ENCODE measurements at regions of chr2 and their contacts with region 1.

Region 1: DNA sequence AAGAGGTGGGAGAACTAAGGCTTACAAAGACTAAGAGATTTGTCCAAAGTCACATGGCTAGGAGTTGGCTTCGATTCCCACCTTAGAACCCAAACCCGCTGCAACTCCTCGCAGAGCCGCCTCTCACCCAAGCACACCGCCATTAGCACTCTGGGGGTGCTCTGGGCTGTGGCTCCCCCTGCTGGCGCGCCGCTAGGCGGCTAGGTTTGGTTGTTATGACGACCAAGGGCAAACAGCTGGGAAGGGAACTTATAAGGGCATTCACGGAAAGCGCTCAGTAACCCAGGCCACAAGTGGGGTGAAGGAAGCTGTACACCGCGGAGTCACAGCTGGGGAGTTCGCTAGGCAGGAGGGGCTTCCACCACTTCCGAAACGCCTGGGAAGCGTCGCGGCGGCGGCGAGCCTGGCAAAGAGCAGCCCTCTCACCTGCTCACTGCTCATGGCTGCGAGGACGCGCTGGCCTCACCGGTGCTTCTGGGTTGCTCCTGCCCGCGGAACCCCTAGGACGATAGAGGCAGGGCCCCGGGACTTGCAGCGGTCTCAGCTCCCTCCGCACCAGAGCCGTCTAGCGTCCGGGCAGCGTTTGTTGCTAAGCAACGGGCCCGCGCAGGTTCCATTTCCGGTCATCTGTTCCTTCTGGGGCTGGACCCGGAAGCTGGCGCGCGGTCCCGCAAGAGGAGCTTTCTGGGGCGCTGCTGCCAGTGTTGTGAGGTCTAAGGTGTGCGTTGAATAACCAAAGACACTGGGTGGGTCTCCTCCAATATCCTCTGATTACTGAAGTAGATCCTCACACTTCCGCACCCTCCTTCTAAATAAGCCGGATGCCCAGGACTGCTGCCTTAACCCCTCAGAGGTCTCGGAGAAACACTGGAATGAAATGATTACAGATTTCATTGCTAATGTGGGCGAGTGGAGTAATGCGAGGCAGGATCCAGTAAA is at the start of gene DNAH7:
- DNase-seq: peak; percentile 95
- H3K4me3 Mint-ChIP-seq: peak within 1 kb of the TSS; percentile 87
- H3K27ac Mint-ChIP-seq: no peak within 1 kb of the TSS
- H3K4me1 Mint-ChIP-seq: peaks cover 9% of the 10 kb centered on the region
- H3K27me3 Mint-ChIP-seq: peaks cover 2% of the 10 kb centered on the region
- total RNA-seq, gene DNAH7: 0.29 TPM in 1 of 2 experiments, not detected in the other

Region 2: GRCh38 chr2:195318440-195319111 is 750.0 kb before region 1 on chr2:
- CTCF ChIA-PET with region 1: interaction called, 5 read pairs
- intact Hi-C with region 1: loop called (anchors 2 kb)
- DNase-seq: peak; percentile 69
- H3K4me3 Mint-ChIP-seq: no peak overlapping the region
- H3K27ac Mint-ChIP-seq: no peak overlapping the region
- H3K4me1 Mint-ChIP-seq: peaks cover 10% of the 10 kb centered on the region
- H3K27me3 Mint-ChIP-seq: no peaks in the 10 kb centered on the region

Region 3: GRCh38 chr2:195575879-195576401 is 492.6 kb before region 1 on chr2:
- CTCF ChIA-PET with region 1: interaction called, 8 read pairs
- intact Hi-C with region 1: loop called (anchors 1 kb)
- DNase-seq: peak; percentile 32
- H3K4me3 Mint-ChIP-seq: peak overlapping the region; percentile 37
- H3K27ac Mint-ChIP-seq: peak overlapping the region; percentile 78
- H3K4me1 Mint-ChIP-seq: peaks cover 77% of the 10 kb centered on the region
- H3K27me3 Mint-ChIP-seq: no peaks in the 10 kb centered on the region

Region 4: GRCh38 chr2:195830968-195831950 is 237.3 kb before region 1 on chr2:
- CTCF ChIA-PET with region 1: no interaction called
- intact Hi-C with region 1: no loop called
- DNase-seq: no peak
- H3K4me3 Mint-ChIP-seq: no peak overlapping the region
- H3K27ac Mint-ChIP-seq: no peak overlapping the region
- H3K4me1 Mint-ChIP-seq: no peaks in the 10 kb centered on the region
- H3K27me3 Mint-ChIP-seq: no peaks in the 10 kb centered on the region

Region 5: DNA sequence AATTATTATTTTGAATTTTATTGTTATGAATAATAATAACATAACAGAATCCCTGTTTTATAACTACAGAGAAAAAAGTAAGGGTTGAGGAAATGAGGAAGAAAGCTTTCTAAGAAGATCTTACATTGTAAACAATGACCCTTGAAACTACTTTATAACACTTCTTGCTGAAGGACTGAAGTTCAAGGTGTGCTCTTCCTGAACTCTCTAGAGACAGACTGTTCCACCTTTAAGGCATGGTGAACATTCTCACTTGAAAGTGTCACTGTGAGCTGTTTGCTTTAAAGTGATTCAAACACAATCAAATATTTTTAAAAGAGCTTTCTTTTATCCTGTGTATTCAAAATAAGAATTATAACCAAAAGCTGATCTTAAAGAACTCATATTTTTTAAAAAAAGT is 131.4 kb before region 1 on chr2:
- CTCF ChIA-PET with region 1: interaction called, 3 read pairs
- intact Hi-C with region 1: loop called (anchors 1 kb)
- DNase-seq: no peak
- H3K4me3 Mint-ChIP-seq: no peak overlapping the region
- H3K27ac Mint-ChIP-seq: no peak overlapping the region
- H3K4me1 Mint-ChIP-seq: no peaks in the 10 kb centered on the region
- H3K27me3 Mint-ChIP-seq: no peaks in the 10 kb centered on the region

Region 6: DNA sequence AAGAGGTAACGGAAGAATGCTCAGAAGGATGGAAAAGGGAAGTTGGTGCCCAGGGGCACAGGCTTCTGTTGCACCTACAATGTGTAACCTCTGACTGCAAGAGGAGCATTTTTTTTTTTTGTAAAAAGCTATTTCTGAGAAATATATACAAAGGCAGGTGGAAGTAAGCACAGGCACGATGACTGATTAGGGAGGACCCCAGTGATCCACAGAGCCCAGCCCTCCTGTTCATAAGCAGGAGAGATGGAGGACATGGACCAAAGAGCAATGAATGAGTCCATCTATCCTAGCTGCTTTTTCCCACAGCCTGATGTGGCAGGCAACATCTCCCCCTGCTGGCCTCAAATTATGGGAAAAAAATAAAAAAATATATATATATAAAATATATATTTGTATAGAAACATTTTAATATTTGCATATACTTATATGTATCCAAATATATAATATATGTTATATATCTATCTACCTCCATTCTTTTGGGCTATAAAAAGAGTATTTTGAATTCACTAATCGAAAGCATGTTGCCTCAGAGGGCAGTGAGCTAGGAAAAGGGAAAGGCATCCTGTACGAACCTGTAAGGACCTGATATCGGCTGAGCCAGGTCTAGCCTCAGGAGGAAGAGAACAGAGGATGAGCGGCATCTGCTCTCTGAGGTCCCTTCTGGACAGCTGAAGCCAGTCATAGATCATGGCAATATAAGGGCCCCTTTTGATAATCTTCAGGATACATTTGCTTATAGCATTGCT is 268.8 kb after region 1 on chr2:
- CTCF ChIA-PET with region 1: interaction called, 24 read pairs
- intact Hi-C with region 1: loop called (anchors 1 kb)
- DNase-seq: peak; percentile 37
- H3K4me3 Mint-ChIP-seq: no peak overlapping the region
- H3K27ac Mint-ChIP-seq: no peak overlapping the region
- H3K4me1 Mint-ChIP-seq: peaks cover 8% of the 10 kb centered on the region
- H3K27me3 Mint-ChIP-seq: no peaks in the 10 kb centered on the region

Measured in activated naive CD4-positive, alpha-beta T cell treated with anti-CD3 and anti-CD28 coated beads for 36 hours (primary cell).